H1 (cell line): ENCODE measurements at regions of chr2 and their contacts with region 1.

Region 1: DNA sequence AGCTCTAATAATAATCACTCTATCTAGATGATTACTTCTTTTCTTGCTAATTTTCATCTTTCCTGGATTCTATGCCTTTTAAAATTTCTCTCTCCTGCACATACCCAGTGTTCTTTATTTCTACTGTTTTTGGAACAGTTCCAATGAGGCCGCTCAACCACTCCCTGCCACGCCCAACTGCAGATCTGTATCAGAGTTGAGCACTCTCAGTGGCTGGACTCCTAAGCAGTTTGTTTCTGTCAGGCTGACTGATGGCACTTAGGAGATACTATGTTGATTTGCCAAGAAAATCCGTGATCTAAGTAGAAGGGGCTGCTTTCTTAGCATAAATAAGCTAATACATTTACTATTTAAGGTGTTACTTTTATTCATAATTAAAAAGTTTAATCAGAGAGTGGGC is 192.8 kb downstream of the ARHGAP15 start:
- DNase-seq: no peak
- H3K4me3 ChIP-seq: no peak overlapping the region
- H3K27ac ChIP-seq: no peak overlapping the region
- H3K4me1 ChIP-seq: no peaks in the 10 kb centered on the region
- H3K27me3 ChIP-seq: no peaks in the 10 kb centered on the region
- CTCF ChIP-seq: no peak
- EP300 ChIP-seq: no peak
- POLR2A ChIP-seq: no peak
- RAD21 ChIP-seq: no peak

Region 2: DNA sequence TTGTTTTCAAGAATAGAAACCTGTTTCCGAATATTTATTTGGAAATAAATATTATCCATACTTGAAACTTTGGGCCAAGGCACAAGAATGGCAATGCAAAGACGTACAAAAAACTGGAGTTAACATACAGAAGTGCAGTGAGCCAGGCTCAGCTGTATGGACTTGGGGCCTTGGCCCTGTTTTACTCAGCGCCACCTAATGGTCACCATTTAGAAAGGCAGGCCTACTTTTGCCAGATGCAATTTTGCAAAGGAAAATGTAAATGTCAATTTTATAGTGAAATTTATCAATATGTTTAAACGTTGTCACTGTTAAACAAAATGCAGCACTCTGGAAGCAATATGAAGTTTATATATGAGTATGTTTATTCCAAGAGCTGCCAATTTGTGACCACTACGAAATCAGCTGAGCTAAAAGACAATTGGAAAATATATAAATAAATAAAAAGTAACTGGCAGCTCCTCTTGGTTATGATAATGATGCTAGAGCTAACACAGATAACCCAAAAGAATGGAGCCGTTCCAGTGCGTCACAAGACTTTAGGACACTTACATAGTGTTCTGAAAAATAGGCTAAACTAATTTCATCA is 37.8 kb before region 1 on chr2:
- CTCF ChIA-PET with region 1: interaction called, 10 read pairs
- POLR2A ChIA-PET with region 1: no interaction called
- DNase-seq: no peak
- H3K4me3 ChIP-seq: no peak overlapping the region
- H3K27ac ChIP-seq: no peak overlapping the region
- H3K4me1 ChIP-seq: no peaks in the 10 kb centered on the region
- H3K27me3 ChIP-seq: no peaks in the 10 kb centered on the region
- CTCF ChIP-seq: peak; percentile 60 to 77 (median 63)
- EP300 ChIP-seq: no peak
- POLR2A ChIP-seq: no peak
- RAD21 ChIP-seq: peak; percentile 44 to 62

Region 3: DNA sequence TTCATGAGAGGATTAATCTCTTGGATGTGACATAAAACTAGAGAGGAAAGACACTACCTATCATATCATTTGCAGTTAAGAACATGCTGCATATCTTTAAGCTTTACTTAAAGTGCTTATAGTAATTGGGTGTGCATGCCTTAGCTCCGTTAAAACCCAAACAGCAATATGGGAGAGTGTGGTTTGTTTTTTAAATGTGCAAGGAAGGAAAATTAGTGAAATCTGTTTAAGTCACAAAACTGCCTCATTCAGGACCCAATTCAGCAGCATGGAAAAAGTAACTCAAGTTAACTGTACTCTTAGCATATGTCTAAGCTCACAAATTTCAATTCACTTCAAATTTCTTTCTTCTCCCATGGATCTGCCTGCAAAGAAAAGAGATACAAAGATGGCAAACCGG is 10.6 kb before region 1 on chr2:
- CTCF ChIA-PET with region 1: no interaction called
- POLR2A ChIA-PET with region 1: no interaction called
- DNase-seq: no peak
- H3K4me3 ChIP-seq: no peak overlapping the region
- H3K27ac ChIP-seq: no peak overlapping the region
- H3K4me1 ChIP-seq: no peaks in the 10 kb centered on the region
- H3K27me3 ChIP-seq: no peaks in the 10 kb centered on the region
- CTCF ChIP-seq: no peak
- EP300 ChIP-seq: no peak
- POLR2A ChIP-seq: no peak
- RAD21 ChIP-seq: no peak